MCF 10A (cell line): ENCODE measurements at regions of chr11 and their contacts with region 1.

Region 1: DNA sequence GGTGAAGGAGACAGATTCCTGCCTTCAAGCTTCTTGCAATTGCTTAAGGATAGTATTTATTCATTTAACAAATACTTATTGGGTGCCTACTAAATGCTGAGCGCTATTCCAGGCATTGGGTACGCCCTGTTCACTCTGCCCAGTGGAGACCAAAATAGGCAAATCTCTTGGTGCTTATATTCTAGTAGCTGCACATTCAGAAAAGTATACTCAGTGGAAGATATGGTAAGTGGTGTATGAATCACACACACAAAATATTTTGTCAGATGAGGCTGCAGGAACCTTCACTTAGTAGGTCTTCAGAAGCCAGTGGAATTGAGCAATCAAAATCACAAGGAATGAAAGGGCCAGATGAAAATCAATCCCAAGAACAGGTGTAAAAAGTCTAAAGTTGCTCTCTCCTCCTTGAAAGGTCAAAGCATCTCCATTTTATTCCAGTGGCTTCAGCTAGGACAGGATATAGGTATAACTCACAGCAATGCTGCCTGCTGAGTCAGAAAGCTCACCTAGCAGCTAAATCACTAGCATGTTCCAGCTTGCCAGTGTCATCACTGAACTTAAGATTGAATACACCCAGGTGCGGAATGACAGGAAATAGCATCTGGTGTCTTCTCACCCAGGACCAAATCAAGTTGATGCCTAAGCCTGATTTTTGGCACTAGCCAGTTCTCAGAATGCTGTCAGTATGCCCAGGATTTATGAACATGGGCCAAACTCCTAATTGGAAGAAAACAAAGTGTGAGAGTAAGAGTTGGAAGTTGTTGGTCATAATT is 83.9 kb downstream of the AMOTL1 start:
- DNase-seq: peak; percentile 87
- H3K4me3 Mint-ChIP-seq: no peak overlapping the region
- H3K27ac Mint-ChIP-seq: no peak overlapping the region
- H3K4me1 Mint-ChIP-seq: peaks cover 11% of the 10 kb centered on the region
- H3K27me3 Mint-ChIP-seq: no peaks in the 10 kb centered on the region
- CTCF ChIP-seq: no peak

Region 2: DNA sequence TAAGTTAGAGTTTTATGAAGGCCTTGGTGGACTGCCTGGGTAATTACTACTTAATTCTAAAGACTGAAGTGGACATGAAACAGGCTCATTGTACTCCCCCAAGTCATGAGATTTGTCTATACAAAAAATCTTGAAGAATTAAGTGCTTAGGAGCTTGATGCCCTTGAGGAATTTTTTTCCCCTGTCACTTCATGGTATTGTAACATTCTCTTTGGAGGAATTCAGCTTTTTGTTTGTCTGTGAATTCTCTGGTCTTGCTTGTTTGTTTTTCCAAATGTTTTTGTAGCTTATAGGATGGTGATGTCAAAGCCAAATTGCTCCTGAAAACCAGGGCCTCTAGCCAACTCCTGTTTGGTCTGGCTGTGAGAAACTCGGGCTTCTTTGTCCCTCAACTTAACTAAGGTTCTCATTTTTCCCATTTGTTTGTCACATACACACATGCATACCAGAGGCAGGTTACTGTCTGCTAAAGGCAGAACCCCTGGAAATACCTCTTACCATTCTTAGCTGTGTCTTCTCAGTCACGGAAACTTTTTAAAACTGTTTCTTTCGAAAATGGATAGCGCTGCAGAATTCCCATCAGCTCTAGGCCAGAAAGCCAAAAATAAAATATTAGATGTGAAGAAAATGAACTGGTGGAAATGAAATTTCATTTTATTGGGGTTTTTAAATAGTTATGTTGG is 17.0 kb before region 1 on chr11:
- CTCF ChIA-PET with region 1: interaction called, 6 read pairs
- POLR2A ChIA-PET with region 1: interaction called, 13 read pairs
- intact Hi-C with region 1: no loop called
- DNase-seq: peak; percentile 18
- H3K4me3 Mint-ChIP-seq: no peak overlapping the region
- H3K27ac Mint-ChIP-seq: peak overlapping the region; percentile 54
- H3K4me1 Mint-ChIP-seq: peaks cover 15% of the 10 kb centered on the region
- H3K27me3 Mint-ChIP-seq: no peaks in the 10 kb centered on the region
- CTCF ChIP-seq: no peak